Dendritic cell treated with granulocyte-macrophage colony-stimulating factor and Interleukin-4, amounts not matched to agents 40 ng/mL and 50 ng/mL, for 4 days (primary cell): ENCODE measurements at regions of chr5 and their contacts with region 1.

Region 1: DNA sequence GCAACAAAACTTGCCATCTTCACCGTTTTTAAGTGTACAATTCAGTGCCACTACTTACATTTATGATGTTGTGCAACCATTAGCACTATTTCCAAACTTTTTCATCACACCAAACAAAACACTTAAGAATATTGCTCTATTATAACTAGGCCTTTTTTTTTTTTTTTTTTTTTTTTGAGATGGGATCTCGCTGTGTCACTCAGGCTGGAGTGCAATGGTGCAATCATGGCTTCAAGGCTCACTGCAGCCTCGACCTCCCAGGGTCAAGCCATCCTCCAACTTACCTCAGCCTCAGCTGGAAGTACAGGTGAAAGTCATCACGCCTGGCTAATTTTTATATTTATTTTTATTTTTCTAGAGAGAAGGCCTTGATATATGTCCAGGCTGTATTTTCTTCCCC is 22.3 kb upstream of the LMNB1 start:
- H3K4me3 Mint-ChIP-seq: no peak overlapping the region
- H3K27ac Mint-ChIP-seq: no peak overlapping the region
- H3K4me1 Mint-ChIP-seq: peaks cover 44% of the 10 kb centered on the region
- H3K27me3 Mint-ChIP-seq: no peaks in the 10 kb centered on the region

Region 2: GRCh38 chr5:126718246-126718868 is 36.3 kb before region 1 on chr5:
- intact Hi-C with region 1: loop called (anchors 5 kb)
- H3K4me3 Mint-ChIP-seq: no peak overlapping the region
- H3K27ac Mint-ChIP-seq: no peak overlapping the region
- H3K4me1 Mint-ChIP-seq: peaks cover 27% of the 10 kb centered on the region
- H3K27me3 Mint-ChIP-seq: no peaks in the 10 kb centered on the region